Calu3 (cell line): ENCODE measurements at regions of chr3 and their contacts with region 1.

Region 1: GRCh38 chr3:105444725-105445124 is 78.0 kb downstream of the ALCAM start:
- DNase-seq: no peak
- H3K4me3 Mint-ChIP-seq: no peak overlapping the region
- H3K27ac Mint-ChIP-seq: no peak overlapping the region
- H3K4me1 Mint-ChIP-seq: peaks cover 23% of the 10 kb centered on the region
- H3K27me3 Mint-ChIP-seq: no peaks in the 10 kb centered on the region
- CTCF ChIP-seq: no peak

Region 2: GRCh38 chr3:105375750-105376511 is 68.8 kb before region 1 on chr3:
- CTCF ChIA-PET with region 1: no interaction called
- intact Hi-C with region 1: loop called (anchors 5 kb)
- DNase-seq: no peak
- H3K4me3 Mint-ChIP-seq: peak overlapping the region; percentile 66
- H3K27ac Mint-ChIP-seq: peak overlapping the region; percentile 89
- H3K4me1 Mint-ChIP-seq: peaks cover 35% of the 10 kb centered on the region
- H3K27me3 Mint-ChIP-seq: no peaks in the 10 kb centered on the region
- CTCF ChIP-seq: no peak

Region 3: DNA sequence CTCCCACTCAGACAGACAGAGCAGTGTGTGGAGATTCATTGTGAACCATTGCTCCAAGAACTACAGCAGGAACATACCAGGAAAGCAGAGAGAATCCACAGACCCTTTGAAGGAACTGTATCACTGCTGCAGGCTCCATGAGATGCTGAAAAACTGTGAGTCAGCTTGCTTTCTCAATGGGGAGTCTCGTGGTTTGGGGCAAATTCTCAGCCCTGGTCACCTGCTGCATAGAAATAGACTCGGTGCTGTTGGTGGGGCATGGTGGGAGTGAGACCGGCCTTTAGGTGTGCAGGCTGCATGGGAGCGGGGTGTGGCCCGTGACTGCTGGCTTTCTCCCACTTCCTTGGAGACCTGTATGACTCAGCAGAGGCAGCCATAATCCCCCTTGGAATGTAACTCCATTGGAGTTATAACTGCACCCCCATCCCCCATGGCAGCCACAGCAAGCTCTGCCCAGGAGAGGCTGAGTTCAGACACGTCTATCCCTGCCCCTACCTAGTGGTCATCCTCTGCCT is 42.4 kb before region 1 on chr3:
- CTCF ChIA-PET with region 1: no interaction called
- intact Hi-C with region 1: loop called (anchors 2 kb)
- DNase-seq: peak; percentile 87
- H3K4me3 Mint-ChIP-seq: peak overlapping the region; percentile 52
- H3K27ac Mint-ChIP-seq: peak overlapping the region; percentile 93
- H3K4me1 Mint-ChIP-seq: peaks cover 53% of the 10 kb centered on the region
- H3K27me3 Mint-ChIP-seq: no peaks in the 10 kb centered on the region
- CTCF ChIP-seq: no peak